Esophagus muscularis mucosa (tissue), 4 donors: ENCODE measurements at regions of chr7 and their contacts with region 1.

Region 1: GRCh38 chr7:100049441-100050311 is at the start of gene ZSCAN21:
- DNase-seq: peak; percentile 96
- H3K4me3 ChIP-seq: peak within 1 kb of the TSS; percentile 72 to 85 (median 82)
- H3K27ac ChIP-seq: peak within 1 kb of the TSS; percentile 92 to 98 (median 96)
- H3K4me1 ChIP-seq: peaks cover 6 to 40% (median 28%) of the 10 kb centered on the region in 4 donors
- H3K27me3 ChIP-seq: no peaks in the 10 kb centered on the region
- CTCF ChIP-seq: peak in 2 of 3 experiments; percentile 8 to 12
- EP300 ChIP-seq: no peak
- POLR2A ChIP-seq: peak; percentile 65
- total RNA-seq, gene ZSCAN21: 12.9 to 18.4 (median 16.1) TPM

Region 2: GRCh38 chr7:99997545-99998137 is 52.0 kb before region 1 on chr7:
- intact Hi-C with region 1: loop called (anchors 5 kb)
- DNase-seq: no peak
- H3K4me3 ChIP-seq: peak overlapping the region; percentile 56 to 63 (median 58)
- H3K27ac ChIP-seq: peak overlapping the region; percentile 61 to 79 (median 71)
- H3K4me1 ChIP-seq: peaks cover 11 to 25% (median 23%) of the 10 kb centered on the region in 4 donors
- H3K27me3 ChIP-seq: no peaks in the 10 kb centered on the region
- CTCF ChIP-seq: peak; percentile 20 to 60 (median 29)
- EP300 ChIP-seq: no peak
- POLR2A ChIP-seq: no peak

Region 3: DNA sequence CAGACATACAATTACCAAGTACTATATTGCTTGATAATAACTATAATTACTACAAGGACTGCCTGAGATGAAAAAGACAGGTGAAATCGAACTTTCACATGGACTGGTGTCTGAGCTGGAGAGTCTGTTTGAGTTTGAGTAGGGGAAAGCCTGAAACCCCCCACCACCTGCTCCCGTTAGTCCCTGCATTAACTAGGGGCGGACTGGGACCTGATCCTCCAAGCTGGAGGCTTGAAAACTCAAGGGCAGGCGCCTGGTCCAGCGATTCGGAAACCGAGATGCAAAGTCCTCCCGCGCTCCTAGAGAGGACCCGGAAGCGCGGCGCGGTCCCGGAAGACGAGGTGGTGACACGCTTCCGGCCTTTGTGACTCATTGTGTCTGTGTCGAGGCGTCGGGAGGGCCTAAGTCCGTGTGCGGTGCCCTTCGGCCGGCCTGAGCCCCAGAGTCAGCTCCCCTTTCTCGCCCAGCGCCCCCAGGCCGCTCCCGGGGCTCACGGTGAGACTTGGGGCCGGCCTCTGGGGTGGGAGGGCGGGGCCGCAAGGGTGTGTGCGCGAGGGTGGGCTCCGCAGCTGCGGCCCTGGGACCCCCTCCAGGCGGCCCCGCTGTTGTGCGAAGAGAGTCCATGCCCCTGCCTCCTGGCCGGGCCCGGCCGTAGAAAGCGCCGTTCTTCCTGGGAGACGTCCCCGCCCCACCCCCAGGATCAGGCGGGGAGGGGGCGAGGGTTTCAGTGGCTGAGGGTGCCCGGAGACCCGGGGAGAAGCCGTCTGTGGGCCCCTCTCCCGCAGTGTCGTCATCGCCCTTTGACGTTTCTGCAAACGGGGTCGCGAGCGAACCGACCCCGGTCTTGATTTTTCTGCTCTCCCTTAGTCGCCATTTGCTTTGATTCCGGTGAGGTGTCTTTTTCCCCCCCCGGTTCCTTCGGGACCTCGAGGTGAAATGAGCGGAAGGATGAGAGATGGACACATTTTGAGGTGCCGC is 34.2 kb before region 1 on chr7 and contains the start of gene ZKSCAN1:
- intact Hi-C with region 1: loop called (anchors 5 kb)
- DNase-seq: peak; percentile 94
- H3K4me3 ChIP-seq: peak within 1 kb of the TSS; percentile 74 to 96 (median 84)
- H3K27ac ChIP-seq: peak within 1 kb of the TSS; percentile 93 to 99 (median 98)
- H3K4me1 ChIP-seq: peaks cover 30 to 50% (median 48%) of the 10 kb centered on the region in 4 donors
- H3K27me3 ChIP-seq: no peaks in the 10 kb centered on the region
- CTCF ChIP-seq: peak in 1 of 3 experiments; percentile 10
- EP300 ChIP-seq: no peak
- POLR2A ChIP-seq: peak; percentile 80
- total RNA-seq, gene ZKSCAN1: 22.7 to 27.0 (median 24.0) TPM

Region 4: GRCh38 chr7:100353685-100354330 is 304.1 kb after region 1 on chr7:
- intact Hi-C with region 1: no loop called
- DNase-seq: no peak
- H3K4me3 ChIP-seq: no peak overlapping the region
- H3K27ac ChIP-seq: no peak overlapping the region
- H3K4me1 ChIP-seq: no peaks in the 10 kb centered on the region
- H3K27me3 ChIP-seq: no peaks in the 10 kb centered on the region
- CTCF ChIP-seq: no peak
- EP300 ChIP-seq: no peak
- POLR2A ChIP-seq: no peak